ENCODE measurements at regions of chr22 and their contacts with region 1.

Region 1: GRCh38 chr22:42614312-42615091 is at the start of gene POLDIP3:
- DNase-seq: peak; percentile 98
- ATAC-seq: peak; percentile 68
- H3K4me3 Mint-ChIP-seq: peak within 1 kb of the TSS; percentile 96
- H3K27ac Mint-ChIP-seq: peak within 1 kb of the TSS; percentile 99
- H3K4me1 Mint-ChIP-seq: peaks cover 35% of the 10 kb centered on the region
- H3K27me3 Mint-ChIP-seq: no peaks in the 10 kb centered on the region
- total RNA-seq, gene POLDIP3: 84.7 to 86.0 TPM

Region 2: DNA sequence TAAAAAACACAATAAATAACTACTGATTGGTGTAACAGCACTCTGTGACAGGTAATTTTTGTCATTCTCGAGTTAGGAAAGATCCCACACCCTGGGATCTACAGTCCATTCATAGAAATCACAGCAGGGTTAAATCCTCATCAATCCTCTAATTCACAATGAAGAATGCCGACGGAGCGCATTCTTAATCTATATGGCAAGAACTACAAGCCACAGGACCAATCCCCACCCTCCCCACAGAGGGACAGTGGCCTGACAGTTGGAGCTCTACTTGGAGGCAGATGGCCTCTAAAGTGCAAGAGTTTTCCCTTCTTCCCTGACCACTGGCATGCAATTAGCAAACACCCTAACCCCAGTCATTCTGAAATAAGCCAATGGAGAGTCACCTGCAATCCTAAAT is 378.2 kb before region 1 on chr22:
- POLR2A ChIA-PET with region 1: no interaction called
- DNase-seq: no peak
- ATAC-seq: no peak
- H3K4me3 Mint-ChIP-seq: no peak overlapping the region
- H3K27ac Mint-ChIP-seq: no peak overlapping the region
- H3K4me1 Mint-ChIP-seq: peaks cover 12% of the 10 kb centered on the region
- H3K27me3 Mint-ChIP-seq: no peaks in the 10 kb centered on the region

Region 3: DNA sequence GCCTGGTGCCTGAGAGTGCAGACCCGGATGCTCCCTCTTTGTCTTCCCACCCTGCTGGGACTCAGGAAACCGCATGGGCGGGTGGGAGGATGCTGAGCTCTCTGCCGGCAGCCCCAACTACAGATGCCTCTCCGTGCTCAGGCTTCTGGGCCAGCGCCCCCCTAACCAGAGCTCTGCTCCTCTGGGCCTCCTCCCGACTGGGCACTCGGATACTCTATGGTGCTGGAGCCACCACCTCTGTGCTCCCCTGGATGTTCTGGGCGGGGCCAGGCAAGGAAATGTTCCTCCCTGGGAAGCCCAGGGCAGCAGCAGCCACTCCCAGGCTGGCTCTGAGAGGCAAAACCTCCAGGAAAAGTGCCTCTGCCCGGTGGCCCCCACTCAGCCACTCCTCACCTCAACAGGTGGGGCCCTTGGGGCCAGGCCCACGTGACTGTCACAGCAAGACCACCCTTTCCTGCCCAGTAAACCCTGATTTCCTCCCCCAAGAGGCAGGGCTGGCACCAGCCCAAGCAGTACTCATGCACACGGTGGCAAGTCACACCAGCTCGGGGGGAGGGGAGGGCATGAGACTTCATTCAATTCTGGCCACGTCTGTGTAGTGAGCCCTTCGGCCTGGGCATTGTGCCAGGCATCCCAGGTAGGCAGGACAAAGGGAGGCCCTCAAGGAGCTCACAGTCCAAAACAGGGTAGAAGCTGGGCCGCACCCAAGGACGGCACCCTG is 289.4 kb before region 1 on chr22:
- POLR2A ChIA-PET with region 1: no interaction called
- DNase-seq: no peak
- ATAC-seq: peak; percentile 60
- H3K4me3 Mint-ChIP-seq: no peak overlapping the region
- H3K27ac Mint-ChIP-seq: peak overlapping the region; percentile 42
- H3K4me1 Mint-ChIP-seq: peaks cover 22% of the 10 kb centered on the region
- H3K27me3 Mint-ChIP-seq: no peaks in the 10 kb centered on the region

Region 4: GRCh38 chr22:42581762-42582716 is 32.5 kb before region 1 on chr22:
- POLR2A ChIA-PET with region 1: interaction called, 34 read pairs
- DNase-seq: peak; percentile 90
- ATAC-seq: peak; percentile 87
- H3K4me3 Mint-ChIP-seq: peak overlapping the region; percentile 98
- H3K27ac Mint-ChIP-seq: peak overlapping the region; percentile 72
- H3K4me1 Mint-ChIP-seq: peaks cover 18% of the 10 kb centered on the region
- H3K27me3 Mint-ChIP-seq: no peaks in the 10 kb centered on the region

Region 5: GRCh38 chr22:42637555-42637954 is 23.1 kb after region 1 on chr22:
- POLR2A ChIA-PET with region 1: interaction called, 14 read pairs
- DNase-seq: no peak
- ATAC-seq: no peak
- H3K4me3 Mint-ChIP-seq: no peak overlapping the region
- H3K27ac Mint-ChIP-seq: no peak overlapping the region
- H3K4me1 Mint-ChIP-seq: peaks cover 7% of the 10 kb centered on the region
- H3K27me3 Mint-ChIP-seq: no peaks in the 10 kb centered on the region

Region 6: GRCh38 chr22:42649246-42650099 is 35.0 kb after region 1 on chr22 and contains the start of gene CYB5R3:
- POLR2A ChIA-PET with region 1: interaction called, 61 read pairs
- DNase-seq: peak; percentile 89
- ATAC-seq: peak; percentile 77
- H3K4me3 Mint-ChIP-seq: peak within 1 kb of the TSS; percentile 96
- H3K27ac Mint-ChIP-seq: peak within 1 kb of the TSS; percentile 98
- H3K4me1 Mint-ChIP-seq: peaks cover 11% of the 10 kb centered on the region
- H3K27me3 Mint-ChIP-seq: no peaks in the 10 kb centered on the region
- total RNA-seq, gene CYB5R3: 61.3 to 65.4 TPM

Region 7: GRCh38 chr22:42856865-42857704 is 242.6 kb after region 1 on chr22 and contains the start of gene ARFGAP3:
- POLR2A ChIA-PET with region 1: interaction called, 10 read pairs
- DNase-seq: peak; percentile 99
- ATAC-seq: peak; percentile 86
- H3K4me3 Mint-ChIP-seq: peak within 1 kb of the TSS; percentile 88
- H3K27ac Mint-ChIP-seq: peak within 1 kb of the TSS; percentile 89
- H3K4me1 Mint-ChIP-seq: peaks cover 4% of the 10 kb centered on the region
- H3K27me3 Mint-ChIP-seq: no peaks in the 10 kb centered on the region
- total RNA-seq, gene ARFGAP3: 34.5 to 38.0 TPM

Measured in activated naive CD8-positive, alpha-beta T cell treated with anti-CD3 and anti-CD28 coated beads, Interleukin-2, amount 10 ng/mL, durations not matched to agents 7 days and 5 days (primary cell).